ENCODE measurements at regions of chr11 and their contacts with region 1.

Region 1: GRCh38 chr11:124070915-124071635 is 29.9 kb upstream of the OR10G7 start:
- DNase-seq: peak; percentile 83
- H3K4me3 Mint-ChIP-seq: no peak overlapping the region
- H3K27ac Mint-ChIP-seq: no peak overlapping the region
- H3K4me1 Mint-ChIP-seq: peaks cover 11% of the 10 kb centered on the region
- H3K27me3 Mint-ChIP-seq: peaks cover 16% of the 10 kb centered on the region
- CTCF ChIP-seq: peak; percentile 61

Region 2: DNA sequence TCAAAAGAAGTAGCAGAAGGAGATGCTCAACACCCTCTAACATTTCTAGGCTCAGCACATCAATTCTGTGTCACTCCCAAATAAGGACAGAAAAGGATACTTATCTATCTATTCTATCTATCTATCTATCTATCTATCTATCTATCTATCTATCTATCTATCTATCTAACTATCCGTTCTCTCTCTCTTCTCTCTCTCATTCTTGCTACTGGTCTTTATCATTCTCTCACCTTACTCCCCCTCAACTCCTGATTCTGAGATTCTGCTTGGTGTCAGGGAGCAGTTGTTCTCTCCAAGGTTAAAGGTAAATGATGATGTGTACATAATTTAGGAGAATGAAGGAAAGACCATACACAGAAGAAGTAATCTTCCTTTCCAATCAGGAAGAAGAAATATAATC is 76.0 kb before region 1 on chr11 and contains the start of gene OR10G6:
- CTCF ChIA-PET with region 1: no interaction called
- POLR2A ChIA-PET with region 1: no interaction called
- intact Hi-C with region 1: no loop called
- DNase-seq: no peak
- H3K4me3 Mint-ChIP-seq: no peak within 1 kb of the TSS
- H3K27ac Mint-ChIP-seq: no peak within 1 kb of the TSS
- H3K4me1 Mint-ChIP-seq: no peaks in the 10 kb centered on the region
- H3K27me3 Mint-ChIP-seq: no peaks in the 10 kb centered on the region
- CTCF ChIP-seq: no peak
- total RNA-seq, gene OR10G6: not detected in 2 replicates

Region 3: DNA sequence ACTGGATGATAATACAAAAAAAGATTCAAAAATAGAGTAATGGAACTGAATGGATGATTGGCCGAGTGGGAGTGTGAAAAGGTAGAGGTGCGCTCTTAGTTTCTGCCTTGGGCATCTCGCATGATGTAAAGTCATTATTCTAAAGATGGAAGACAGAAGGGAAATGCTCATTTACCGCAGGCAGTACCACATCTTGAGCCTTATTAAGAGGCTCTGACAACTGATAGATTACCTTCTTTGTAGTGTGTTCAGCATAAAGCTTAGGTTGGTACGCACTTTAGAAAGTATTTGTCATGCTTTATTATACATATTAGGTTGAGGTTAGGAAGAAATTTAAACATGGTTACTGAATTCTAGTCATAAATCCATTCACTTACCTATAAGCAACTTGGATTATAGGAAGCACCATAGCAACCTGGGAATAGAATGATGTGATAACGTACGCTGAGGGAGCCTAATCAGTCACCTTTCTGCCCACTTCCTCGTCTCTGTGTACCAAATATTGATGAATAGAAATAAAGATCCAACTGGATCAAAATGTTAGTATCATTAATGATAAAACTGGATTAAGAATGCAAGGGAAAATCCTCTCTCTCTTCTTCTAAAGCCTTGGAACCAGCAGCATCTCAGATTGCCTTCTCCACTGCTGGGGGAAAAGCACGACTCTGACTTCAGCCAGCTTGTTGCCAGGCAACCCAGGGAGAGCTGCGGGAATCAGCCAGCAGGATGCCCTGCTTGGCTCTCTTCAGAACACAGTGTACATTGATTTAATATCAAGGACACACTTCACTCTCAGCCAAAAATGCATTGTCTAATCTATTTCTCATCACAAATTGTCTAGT is 15.2 kb after region 1 on chr11:
- CTCF ChIA-PET with region 1: interaction called, 20 read pairs
- POLR2A ChIA-PET with region 1: no interaction called
- intact Hi-C with region 1: no loop called
- DNase-seq: no peak
- H3K4me3 Mint-ChIP-seq: no peak overlapping the region
- H3K27ac Mint-ChIP-seq: no peak overlapping the region
- H3K4me1 Mint-ChIP-seq: peaks cover 10% of the 10 kb centered on the region
- H3K27me3 Mint-ChIP-seq: no peaks in the 10 kb centered on the region
- CTCF ChIP-seq: no peak

Region 4: GRCh38 chr11:124194698-124195410 is 123.8 kb after region 1 on chr11:
- CTCF ChIA-PET with region 1: interaction called, 61 read pairs
- POLR2A ChIA-PET with region 1: no interaction called
- intact Hi-C with region 1: loop called (anchors 1 kb)
- DNase-seq: peak; percentile 87
- H3K4me3 Mint-ChIP-seq: no peak overlapping the region
- H3K27ac Mint-ChIP-seq: no peak overlapping the region
- H3K4me1 Mint-ChIP-seq: peaks cover 4% of the 10 kb centered on the region
- H3K27me3 Mint-ChIP-seq: peaks cover 28% of the 10 kb centered on the region
- CTCF ChIP-seq: peak; percentile 78

Region 5: DNA sequence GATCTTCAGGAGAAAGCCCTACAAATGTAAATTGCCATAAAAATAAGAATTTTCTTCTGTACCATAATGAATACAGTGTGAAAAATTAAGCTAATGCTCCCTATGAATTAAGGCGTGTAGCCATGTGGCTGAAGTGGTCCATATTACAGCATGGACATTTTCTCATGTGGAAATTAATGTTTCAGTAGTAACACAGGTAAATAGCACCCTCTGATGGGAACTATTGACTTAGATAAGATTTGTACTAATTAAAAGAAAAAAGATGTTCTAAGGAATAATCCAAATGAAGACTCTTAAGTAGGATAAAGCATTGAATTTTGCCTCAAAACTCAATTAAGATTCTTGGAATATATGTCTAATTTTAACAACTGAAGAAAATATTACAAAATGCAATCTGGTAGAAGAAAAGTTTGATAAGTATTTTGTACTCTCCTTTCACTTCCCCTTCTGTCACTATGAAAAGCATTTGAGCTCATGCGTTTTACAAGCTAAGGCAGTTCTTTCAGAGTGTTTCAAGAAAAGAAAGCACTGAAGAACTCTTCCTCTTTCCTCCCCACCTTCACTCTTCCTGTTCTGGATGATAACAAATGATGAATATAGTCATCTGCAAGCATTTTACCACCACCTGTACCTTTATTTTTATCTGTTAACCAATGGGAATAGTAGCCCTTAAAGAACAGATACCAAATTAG is 258.9 kb after region 1 on chr11:
- CTCF ChIA-PET with region 1: interaction called, 5 read pairs
- POLR2A ChIA-PET with region 1: no interaction called
- intact Hi-C with region 1: loop called (anchors 1 kb)
- DNase-seq: peak; percentile 21
- H3K4me3 Mint-ChIP-seq: no peak overlapping the region
- H3K27ac Mint-ChIP-seq: no peak overlapping the region
- H3K4me1 Mint-ChIP-seq: no peaks in the 10 kb centered on the region
- H3K27me3 Mint-ChIP-seq: peaks cover 94% of the 10 kb centered on the region
- CTCF ChIP-seq: no peak

Region 6: DNA sequence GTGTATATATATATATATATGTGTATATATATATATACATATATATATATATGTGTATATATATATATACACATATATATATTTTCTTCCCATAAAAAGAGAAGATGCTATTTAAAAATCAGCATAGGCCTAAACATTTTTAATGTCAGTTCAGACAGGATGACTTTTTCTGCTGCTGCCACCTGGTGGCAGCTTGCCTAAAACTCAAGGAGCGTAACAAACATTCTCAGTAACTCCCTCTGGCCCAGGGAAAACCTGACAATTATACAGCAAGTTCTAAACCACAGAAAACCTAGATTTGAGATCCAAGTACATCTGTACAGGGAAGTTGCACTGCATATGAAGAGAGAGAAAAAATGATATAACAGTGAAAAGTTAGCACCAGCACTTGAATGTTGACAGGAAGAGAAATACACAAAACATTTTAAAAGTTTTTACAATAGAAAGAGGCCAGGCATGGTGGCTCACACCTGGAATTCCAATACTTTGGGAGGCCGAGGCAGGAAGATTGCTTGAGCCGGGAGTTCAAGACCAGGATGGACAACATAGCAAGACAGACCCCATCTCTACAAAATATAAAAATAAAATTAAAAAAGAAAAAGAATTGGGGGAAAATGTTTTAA is 515.3 kb after region 1 on chr11:
- CTCF ChIA-PET with region 1: interaction called, 13 read pairs
- POLR2A ChIA-PET with region 1: no interaction called
- intact Hi-C with region 1: loop called (anchors 10 kb)
- DNase-seq: peak; percentile 74
- H3K4me3 Mint-ChIP-seq: no peak overlapping the region
- H3K27ac Mint-ChIP-seq: no peak overlapping the region
- H3K4me1 Mint-ChIP-seq: no peaks in the 10 kb centered on the region
- H3K27me3 Mint-ChIP-seq: peaks cover 87% of the 10 kb centered on the region
- CTCF ChIP-seq: peak; percentile 52

Measured in MCF 10A (cell line).